CD4-positive, alpha-beta T cell (primary cell): ENCODE measurements at regions of chrX and their contacts with region 1.

Region 1: DNA sequence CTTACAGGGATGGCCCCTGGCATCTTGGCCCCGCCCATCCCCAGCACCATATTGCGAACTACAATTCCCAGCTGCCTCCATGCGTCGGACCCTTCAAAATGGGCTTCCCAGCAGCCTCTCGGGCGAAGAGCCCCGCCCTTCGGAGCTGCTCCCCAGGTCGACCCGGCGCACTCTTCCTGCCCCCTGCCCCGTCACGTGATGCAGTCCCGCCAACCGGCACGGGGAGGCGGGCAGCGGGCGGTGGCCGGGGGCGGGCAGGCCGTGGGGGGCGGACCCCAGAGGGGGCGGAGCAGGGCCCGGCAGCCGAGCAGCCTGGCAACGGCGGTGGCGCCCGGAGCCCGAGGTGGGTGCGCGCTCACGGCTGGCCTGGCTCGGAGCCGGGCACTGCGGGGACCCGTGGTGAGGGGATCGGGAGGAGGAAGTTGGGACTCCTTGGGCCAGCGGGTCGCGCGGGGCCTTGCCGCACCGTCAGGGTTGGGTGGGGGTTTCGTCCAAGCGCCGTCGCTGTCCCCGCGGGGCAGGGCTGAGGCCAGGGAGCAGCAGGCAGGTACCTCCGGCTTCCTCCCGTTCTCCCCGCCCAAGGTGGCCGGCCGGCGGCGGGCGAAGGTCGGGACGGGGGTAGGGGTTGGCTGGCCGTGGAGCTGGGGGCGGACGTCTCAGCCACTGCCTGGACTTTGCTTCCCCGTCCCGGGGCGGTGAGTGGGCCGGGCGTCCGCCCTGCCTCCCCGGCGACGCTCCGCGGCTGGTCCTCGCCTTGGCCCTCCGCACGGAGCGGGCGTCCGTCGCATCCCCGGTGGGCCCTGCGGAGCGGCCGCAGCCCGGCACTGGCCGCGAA is at the start of gene MTM1:
- DNase-seq: peak; percentile 76 to 97 (median 89)
- ATAC-seq: peak; percentile 88
- H3K4me3 ChIP-seq: peak within 1 kb of the TSS; percentile 62
- H3K4me3 Mint-ChIP-seq: peak within 1 kb of the TSS; percentile 98
- H3K27ac ChIP-seq: peak within 1 kb of the TSS; percentile 40 to 72
- H3K27ac Mint-ChIP-seq: peak within 1 kb of the TSS; percentile 95
- H3K4me1 ChIP-seq: peaks cover 26% of the 10 kb centered on the region
- H3K4me1 Mint-ChIP-seq: peaks cover 44% of the 10 kb centered on the region
- H3K27me3 ChIP-seq: no peaks in the 10 kb centered on the region
- H3K27me3 Mint-ChIP-seq: no peaks in the 10 kb centered on the region
- CTCF ChIP-seq: no peak
- total RNA-seq, gene MTM1: 20.6 to 26.9 TPM

Region 2: DNA sequence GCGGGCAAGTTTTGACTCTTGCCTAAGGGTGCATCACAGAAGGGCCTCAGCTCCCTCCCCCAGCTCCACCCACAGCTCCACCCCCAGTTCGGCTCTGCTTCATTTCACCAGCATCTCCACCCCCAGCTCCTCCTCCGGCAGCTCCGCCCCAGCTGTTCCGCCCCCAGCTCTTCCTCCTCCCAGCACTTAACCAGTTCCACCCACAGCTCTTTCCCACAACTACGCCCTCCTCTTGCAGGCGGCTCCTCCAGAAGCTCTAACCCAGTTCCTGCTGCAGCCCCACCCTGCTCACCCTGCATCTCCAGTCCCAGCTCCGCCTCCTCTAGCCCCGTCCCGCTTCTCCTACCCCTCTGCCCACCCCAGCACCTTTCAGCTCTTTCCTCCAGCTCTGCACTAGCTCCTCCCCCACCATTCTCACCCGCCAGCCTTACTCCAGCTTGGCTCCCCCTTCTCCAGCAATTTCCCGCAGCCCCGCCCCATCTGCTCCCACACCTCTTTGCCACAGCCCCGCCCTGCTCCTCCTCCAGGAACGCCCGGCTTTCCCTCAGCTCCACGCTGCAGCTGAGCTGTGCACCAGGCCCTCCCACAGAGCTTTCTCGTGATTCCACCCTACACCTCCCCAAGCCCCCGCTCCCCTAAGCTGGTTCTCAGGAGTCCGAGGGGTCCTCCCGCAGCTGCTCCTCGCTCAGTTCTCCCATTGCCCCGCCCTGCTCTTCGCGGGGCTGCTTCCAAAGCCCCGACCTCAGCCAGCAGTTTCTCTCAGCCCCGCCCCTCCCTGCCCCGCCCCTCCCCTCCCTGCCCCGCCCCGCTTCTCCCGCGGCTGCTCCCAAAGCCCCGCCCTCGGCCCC is 1029.0 kb before region 1 on chrX:
- CTCF ChIA-PET with region 1: no interaction called
- POLR2A ChIA-PET with region 1: interaction called, 3 read pairs
- intact Hi-C with region 1: loop called in 1 of 2 experiments (anchors 10 kb)
- DNase-seq: peak; percentile 77 to 96 (median 85)
- ATAC-seq: peak; percentile 52
- H3K4me3 ChIP-seq: peak overlapping the region; percentile 65
- H3K4me3 Mint-ChIP-seq: peak overlapping the region; percentile 89
- H3K27ac ChIP-seq: peak overlapping the region; percentile 56 to 58
- H3K27ac Mint-ChIP-seq: peak overlapping the region; percentile 96
- H3K4me1 ChIP-seq: peaks cover 16% of the 10 kb centered on the region
- H3K4me1 Mint-ChIP-seq: peaks cover 8% of the 10 kb centered on the region
- H3K27me3 ChIP-seq: no peaks in the 10 kb centered on the region
- H3K27me3 Mint-ChIP-seq: no peaks in the 10 kb centered on the region
- CTCF ChIP-seq: no peak

Region 3: DNA sequence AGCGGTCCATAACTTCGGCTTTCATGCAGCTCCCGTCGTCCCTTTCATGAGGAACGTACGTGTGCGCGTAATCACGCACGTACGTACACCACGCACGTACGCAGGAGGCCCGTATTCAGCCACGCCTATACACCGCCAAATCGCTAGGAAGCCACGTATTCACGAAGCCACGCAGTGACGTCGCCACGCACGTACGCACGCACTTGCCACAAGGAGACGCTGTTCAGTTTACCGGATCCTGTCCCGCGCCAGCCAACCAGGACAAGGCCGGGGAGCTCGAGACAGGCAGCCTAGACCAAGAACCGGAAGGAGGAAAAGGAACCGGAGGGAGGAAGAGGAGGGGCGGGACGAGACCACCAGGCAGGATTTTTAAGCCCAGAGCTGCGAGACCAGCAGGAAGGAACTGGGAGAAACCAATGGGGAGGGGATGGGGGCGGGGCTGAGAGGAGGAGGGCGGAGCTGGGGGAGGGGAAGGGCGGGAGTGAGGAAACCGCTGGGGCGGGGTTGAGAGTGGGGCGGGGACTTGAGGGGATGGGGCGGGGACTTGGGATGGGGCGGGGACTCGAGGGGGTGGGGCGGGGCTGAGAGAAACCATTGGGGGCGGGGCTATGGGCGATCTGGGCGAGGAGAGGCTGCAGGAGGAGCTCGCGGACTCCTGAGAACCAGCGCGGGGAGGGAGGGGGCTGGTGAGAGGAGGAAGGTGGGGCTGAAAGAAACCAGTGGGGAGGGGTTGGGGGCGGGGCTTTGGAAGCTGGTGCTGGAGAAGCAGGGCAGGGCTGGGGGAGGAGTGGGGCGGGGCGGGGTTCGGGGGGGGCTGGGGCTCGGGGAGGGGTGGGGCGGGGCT is 629.9 kb before region 1 on chrX and contains the start of gene EOLA2:
- CTCF ChIA-PET with region 1: no interaction called
- POLR2A ChIA-PET with region 1: interaction called, 10 read pairs
- intact Hi-C with region 1: no loop called
- DNase-seq: peak; percentile 83 to 98 (median 90)
- ATAC-seq: peak; percentile 47
- H3K4me3 ChIP-seq: peak within 1 kb of the TSS; percentile 93
- H3K4me3 Mint-ChIP-seq: peak within 1 kb of the TSS; percentile 94
- H3K27ac ChIP-seq: peak within 1 kb of the TSS; percentile 82 to 97
- H3K27ac Mint-ChIP-seq: peak within 1 kb of the TSS; percentile 84
- H3K4me1 ChIP-seq: peaks cover 15% of the 10 kb centered on the region
- H3K4me1 Mint-ChIP-seq: no peaks in the 10 kb centered on the region
- H3K27me3 ChIP-seq: no peaks in the 10 kb centered on the region
- H3K27me3 Mint-ChIP-seq: no peaks in the 10 kb centered on the region
- CTCF ChIP-seq: peak; percentile 34
- total RNA-seq, gene EOLA2: 48.7 to 54.7 TPM

Region 4: DNA sequence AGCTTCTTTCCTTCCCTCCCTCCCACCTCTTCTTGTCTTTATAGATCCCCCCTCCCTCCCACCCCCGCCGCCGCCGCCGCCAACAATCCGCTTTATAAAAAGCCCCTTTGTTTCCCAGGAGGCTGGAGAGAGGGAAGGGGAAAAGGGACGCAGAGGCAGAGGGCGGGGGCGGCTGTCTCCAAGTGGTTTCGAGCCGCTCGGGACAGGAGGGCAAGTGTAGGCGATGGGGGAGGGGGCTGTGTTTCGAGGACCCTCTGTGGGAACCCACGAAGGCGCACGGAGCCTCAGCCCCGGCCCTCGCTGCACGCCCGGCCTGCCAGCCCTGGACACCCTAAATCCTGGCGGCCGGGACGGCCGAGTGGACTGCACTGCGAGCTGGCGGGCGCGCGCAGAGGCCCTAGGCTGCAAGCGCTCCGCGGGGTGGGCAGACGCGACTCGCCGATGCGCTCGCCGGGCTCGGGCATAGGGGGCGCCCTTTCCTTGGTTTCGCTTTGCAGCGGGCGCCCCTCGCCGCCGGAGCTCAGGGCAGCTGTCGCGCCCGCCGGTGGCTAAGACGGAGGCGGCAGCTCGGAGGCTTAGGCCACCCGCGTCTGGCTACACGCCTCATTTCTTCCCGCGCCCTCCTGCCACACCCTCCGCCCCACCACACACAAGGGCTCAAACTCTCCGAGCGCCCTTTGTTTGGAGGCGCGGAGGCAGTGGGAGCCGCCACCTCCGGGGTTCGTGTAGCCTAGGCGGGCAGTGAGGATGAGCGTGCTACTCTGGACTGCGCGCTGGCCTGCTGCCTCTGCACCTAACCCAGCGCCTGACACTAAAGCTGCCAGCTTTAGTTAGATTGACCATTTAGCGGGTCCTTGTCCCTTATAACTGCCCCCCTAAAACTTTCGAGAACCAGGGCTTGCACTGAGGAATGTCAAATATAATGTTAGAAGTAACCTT is 203.2 kb before region 1 on chrX:
- CTCF ChIA-PET with region 1: interaction called, 4 read pairs
- POLR2A ChIA-PET with region 1: interaction called, 11 read pairs
- intact Hi-C with region 1: loop called in 1 of 2 experiments (anchors 10 kb)
- DNase-seq: peak; percentile 19 to 78 (median 54)
- ATAC-seq: peak; percentile 30
- H3K4me3 ChIP-seq: peak overlapping the region; percentile 67
- H3K4me3 Mint-ChIP-seq: peak overlapping the region; percentile 91
- H3K27ac ChIP-seq: no peak overlapping the region
- H3K27ac Mint-ChIP-seq: peak overlapping the region; percentile 58
- H3K4me1 ChIP-seq: peaks cover 42% of the 10 kb centered on the region
- H3K4me1 Mint-ChIP-seq: peaks cover 29% of the 10 kb centered on the region
- H3K27me3 ChIP-seq: peaks cover 4 to 14% of the 10 kb centered on the region in 2 experiments
- H3K27me3 Mint-ChIP-seq: peaks cover 19% of the 10 kb centered on the region
- CTCF ChIP-seq: peak; percentile 47

Region 5: GRCh38 chrX:150547375-150548115 is 21.0 kb before region 1 on chrX:
- CTCF ChIA-PET with region 1: no interaction called
- POLR2A ChIA-PET with region 1: interaction called, 68 read pairs
- intact Hi-C with region 1: loop called in 1 of 2 experiments (anchors 2 kb)
- DNase-seq: peak in 2 of 14 experiments; percentile 38
- ATAC-seq: no peak
- H3K4me3 ChIP-seq: peak overlapping the region; percentile 50
- H3K4me3 Mint-ChIP-seq: peak overlapping the region; percentile 83
- H3K27ac ChIP-seq: peak overlapping the region in 1 of 2 donors; percentile 13
- H3K27ac Mint-ChIP-seq: peak overlapping the region; percentile 84
- H3K4me1 ChIP-seq: peaks cover 40% of the 10 kb centered on the region
- H3K4me1 Mint-ChIP-seq: peaks cover 34% of the 10 kb centered on the region
- H3K27me3 ChIP-seq: no peaks in the 10 kb centered on the region
- H3K27me3 Mint-ChIP-seq: no peaks in the 10 kb centered on the region
- CTCF ChIP-seq: no peak

Region 6: DNA sequence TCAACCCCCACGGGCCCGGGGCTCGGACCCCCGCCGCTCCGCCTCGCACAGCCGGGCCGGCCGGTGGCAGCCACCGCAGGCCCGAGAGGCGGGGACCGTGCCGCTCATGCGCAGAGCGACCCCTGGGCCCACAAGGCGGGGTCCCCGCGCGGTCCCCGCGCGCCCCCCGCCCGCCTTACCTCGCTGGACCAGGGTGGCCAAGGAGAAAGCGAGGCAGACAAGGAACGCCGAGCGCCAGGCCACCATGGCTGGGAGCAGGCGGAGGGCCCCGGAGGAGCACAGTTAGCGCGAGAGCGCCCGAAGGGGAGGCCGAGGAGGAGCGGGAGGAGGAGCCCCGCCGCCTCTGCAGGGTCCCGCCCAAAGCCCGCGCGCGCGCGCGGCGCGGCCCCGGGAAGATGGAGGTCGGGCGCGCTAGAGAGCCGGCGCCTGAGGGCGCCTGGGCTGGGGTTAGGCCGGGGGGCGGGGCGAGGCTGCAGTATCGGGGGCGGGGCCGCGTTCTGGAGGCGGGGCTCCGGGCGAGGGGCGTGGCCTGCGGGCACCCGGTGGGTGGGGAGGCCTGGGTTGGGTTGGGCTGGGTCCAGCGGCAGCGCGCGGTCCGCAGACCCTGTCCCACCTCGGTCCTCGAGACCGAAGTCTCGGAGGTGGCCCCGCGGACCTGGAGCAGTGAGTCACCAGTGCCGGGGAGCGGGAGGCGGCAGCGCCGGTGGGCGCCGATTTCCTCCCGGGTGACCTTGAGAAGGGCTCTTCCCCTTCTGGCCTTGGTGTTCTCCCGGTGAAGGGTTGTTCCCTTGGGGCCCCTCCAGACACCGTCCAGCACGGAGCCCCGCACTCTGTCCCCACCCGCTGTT is 330.0 kb after region 1 on chrX and contains the start of gene CD99L2:
- CTCF ChIA-PET with region 1: no interaction called
- POLR2A ChIA-PET with region 1: no interaction called
- intact Hi-C with region 1: loop called in 1 of 2 experiments (anchors 2 kb)
- DNase-seq: peak; percentile 82 to 94 (median 88)
- ATAC-seq: peak; percentile 91
- H3K4me3 ChIP-seq: peak within 1 kb of the TSS; percentile 79
- H3K4me3 Mint-ChIP-seq: peak within 1 kb of the TSS; percentile 96
- H3K27ac ChIP-seq: no peak within 1 kb of the TSS
- H3K27ac Mint-ChIP-seq: peak within 1 kb of the TSS; percentile 76
- H3K4me1 ChIP-seq: peaks cover 12% of the 10 kb centered on the region
- H3K4me1 Mint-ChIP-seq: peaks cover 15% of the 10 kb centered on the region
- H3K27me3 ChIP-seq: no peaks in the 10 kb centered on the region
- H3K27me3 Mint-ChIP-seq: no peaks in the 10 kb centered on the region
- CTCF ChIP-seq: no peak
- total RNA-seq, gene CD99L2: 5.3 to 6.5 TPM